Left colon (tissue), 2 donors: ENCODE measurements at regions of chr5 and their contacts with region 1.

Region 1: DNA sequence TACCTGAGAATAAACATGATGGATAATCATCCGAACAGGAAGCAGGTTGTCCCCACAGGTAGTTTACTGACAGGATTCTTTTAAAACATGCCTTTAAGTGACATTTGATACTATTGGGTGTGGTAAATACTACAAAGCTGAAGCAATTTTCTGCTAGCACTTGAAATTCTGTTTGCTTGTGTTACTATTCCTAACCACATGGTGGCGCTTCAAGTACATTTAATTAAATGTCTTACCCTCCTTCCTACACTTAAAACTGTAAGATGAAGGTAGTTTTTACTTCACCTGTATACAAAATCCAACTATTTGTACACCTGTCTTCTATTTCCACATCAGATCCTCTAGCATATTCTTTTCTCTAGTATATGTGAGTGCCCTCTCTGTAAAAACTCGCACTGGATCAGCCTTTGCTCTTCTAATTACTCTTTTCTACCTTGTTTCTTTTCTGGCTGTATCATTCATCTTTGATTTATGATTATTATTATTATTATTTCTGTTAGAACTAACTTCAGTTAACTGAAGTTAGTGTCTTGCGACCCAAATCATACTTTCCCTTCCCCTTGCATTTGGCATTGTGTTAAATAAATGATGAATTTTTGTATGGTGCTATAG is 18.4 kb downstream of the SLC25A46 start:
- DNase-seq: no peak
- ATAC-seq: peak; percentile 26

Region 2: GRCh38 chr5:110638970-110639902 is 118.0 kb before region 1 on chr5:
- intact Hi-C with region 1: no loop called
- DNase-seq: no peak
- ATAC-seq: no peak

Region 3: GRCh38 chr5:111092062-111092853 is 335.0 kb after region 1 on chr5 and contains the start of gene WDR36:
- intact Hi-C with region 1: loop called in 1 of 2 experiments (anchors 5 kb)
- DNase-seq: peak; percentile 86 to 89
- ATAC-seq: peak; percentile 99
- total RNA-seq, gene WDR36: 15.9 to 18.5 TPM